Mammary epithelial cell (primary cell): ENCODE measurements at regions of chr21 and their contacts with region 1.

Region 1: GRCh38 chr21:36028127-36029069 is 31.9 kb downstream of the SETD4 start:
- DNase-seq: peak; percentile 70
- H3K4me3 ChIP-seq: no peak overlapping the region
- H3K27ac ChIP-seq: no peak overlapping the region
- H3K4me1 ChIP-seq: peaks cover 11% of the 10 kb centered on the region
- H3K27me3 ChIP-seq: no peaks in the 10 kb centered on the region
- CTCF ChIP-seq: peak; percentile 96 to 97

Region 2: DNA sequence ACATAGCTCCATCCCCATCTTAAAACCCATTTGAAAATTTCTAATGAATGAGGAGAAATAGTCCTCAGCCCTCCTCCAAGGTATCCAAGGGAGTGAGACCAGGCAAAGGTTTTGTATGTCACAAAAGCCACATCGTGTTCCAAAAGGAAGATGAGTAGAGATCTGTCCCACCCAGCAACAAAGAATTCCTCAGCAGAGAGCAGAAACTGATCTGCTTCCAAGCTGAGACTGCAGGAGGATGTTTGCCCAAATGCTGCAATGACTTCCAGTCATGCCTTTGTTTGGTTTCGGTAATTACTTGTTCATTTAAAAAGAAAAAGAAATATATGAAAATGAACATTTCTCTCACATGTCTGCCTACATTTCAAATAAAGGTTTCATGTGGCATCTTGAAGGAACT is 155.0 kb before region 1 on chr21:
- CTCF ChIA-PET with region 1: no interaction called
- dilution Hi-C with region 1: no loop called
- in situ Hi-C with region 1: no loop called
- intact Hi-C with region 1: loop called (anchors 10 kb)
- DNase-seq: no peak
- H3K4me3 ChIP-seq: no peak overlapping the region
- H3K27ac ChIP-seq: no peak overlapping the region
- H3K4me1 ChIP-seq: no peaks in the 10 kb centered on the region
- H3K27me3 ChIP-seq: peaks cover 5% of the 10 kb centered on the region
- CTCF ChIP-seq: no peak

Region 3: DNA sequence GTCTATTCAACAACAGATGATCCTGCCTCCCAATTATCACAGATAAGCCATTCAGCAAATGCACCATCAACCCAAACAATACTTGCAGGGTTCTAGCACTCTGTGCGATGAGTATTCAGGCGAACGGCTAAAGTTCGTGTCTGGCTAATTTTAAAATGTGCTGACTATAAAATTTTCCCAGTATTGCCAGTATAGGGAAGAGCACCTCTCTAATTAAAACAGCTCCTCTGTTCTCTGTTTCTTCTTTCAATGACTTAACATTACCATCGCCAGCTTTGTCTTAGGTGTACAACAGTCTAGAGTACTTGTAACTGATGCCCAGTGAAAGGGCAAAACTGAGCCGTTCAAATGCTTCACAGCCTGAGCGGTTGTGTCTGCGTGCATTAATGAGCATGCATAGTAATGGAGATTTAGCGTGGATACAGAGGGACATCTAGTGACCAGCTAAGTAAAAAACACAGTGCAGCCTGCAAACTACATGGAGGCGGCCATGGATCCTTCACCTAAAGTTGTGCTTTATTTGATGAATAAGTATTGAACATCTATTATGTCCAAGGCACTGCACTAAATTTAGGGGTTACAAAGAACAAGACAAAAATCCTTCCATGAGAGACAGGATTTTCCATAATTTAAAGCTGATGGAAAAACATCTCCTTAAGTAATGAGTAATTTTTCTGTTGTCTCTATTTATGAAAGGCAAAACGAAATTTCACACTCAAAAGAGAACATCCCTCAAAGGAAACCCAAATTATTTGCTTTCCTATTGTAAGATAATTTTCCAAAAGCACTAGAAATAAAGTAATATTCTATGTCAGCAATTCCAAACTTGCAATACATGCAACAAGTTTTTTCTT is 88.1 kb before region 1 on chr21:
- CTCF ChIA-PET with region 1: no interaction called
- dilution Hi-C with region 1: no loop called
- in situ Hi-C with region 1: no loop called
- intact Hi-C with region 1: loop called (anchors 2 kb)
- DNase-seq: peak; percentile 66
- H3K4me3 ChIP-seq: no peak overlapping the region
- H3K27ac ChIP-seq: no peak overlapping the region
- H3K4me1 ChIP-seq: no peaks in the 10 kb centered on the region
- H3K27me3 ChIP-seq: no peaks in the 10 kb centered on the region
- CTCF ChIP-seq: peak; percentile 77

Region 4: DNA sequence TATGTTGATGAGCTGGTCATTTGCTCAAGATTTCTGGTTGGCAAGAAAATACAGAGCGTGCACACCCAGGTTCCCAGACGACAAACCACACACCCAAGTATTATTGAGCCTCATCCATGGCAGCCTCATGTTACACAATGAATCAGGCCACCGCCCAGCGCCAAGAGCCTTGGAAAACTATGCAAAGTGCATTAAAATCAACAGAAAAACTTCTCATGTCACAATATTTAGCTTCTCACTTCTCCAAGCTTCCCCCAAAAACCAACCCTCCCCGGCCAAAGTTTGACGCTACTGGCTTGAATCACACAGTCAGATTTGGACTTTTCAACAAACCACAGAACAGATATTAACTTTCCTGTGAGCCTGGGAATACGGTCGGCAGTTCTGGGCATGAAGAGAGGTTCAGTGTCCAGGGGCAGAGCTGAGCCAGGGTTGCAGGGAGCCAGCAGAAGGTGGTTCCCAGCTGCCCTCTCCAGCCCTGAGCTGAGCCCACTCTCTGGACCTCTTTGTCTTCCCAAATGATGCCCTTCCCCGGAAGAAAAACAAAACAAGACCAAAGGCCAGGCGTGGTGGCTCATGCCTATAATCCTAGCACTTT is 39.2 kb before region 1 on chr21:
- CTCF ChIA-PET with region 1: no interaction called
- dilution Hi-C with region 1: no loop called
- in situ Hi-C with region 1: no loop called
- intact Hi-C with region 1: no loop called
- DNase-seq: peak; percentile 29
- H3K4me3 ChIP-seq: no peak overlapping the region
- H3K27ac ChIP-seq: no peak overlapping the region
- H3K4me1 ChIP-seq: no peaks in the 10 kb centered on the region
- H3K27me3 ChIP-seq: no peaks in the 10 kb centered on the region
- CTCF ChIP-seq: no peak

Region 5: GRCh38 chr21:36859744-36860501 is 831.5 kb after region 1 on chr21:
- CTCF ChIA-PET with region 1: no interaction called
- dilution Hi-C with region 1: no loop called
- in situ Hi-C with region 1: no loop called
- intact Hi-C with region 1: no loop called
- DNase-seq: peak; percentile 21
- H3K4me3 ChIP-seq: no peak overlapping the region
- H3K27ac ChIP-seq: peak overlapping the region; percentile 77
- H3K4me1 ChIP-seq: peaks cover 20% of the 10 kb centered on the region
- H3K27me3 ChIP-seq: no peaks in the 10 kb centered on the region
- CTCF ChIP-seq: no peak